Activated CD8-positive, alpha-beta memory T cell treated with anti-CD3 and anti-CD28 coated beads, Interleukin-2, amount 10 ng/mL, durations not matched to agents 7 days and 5 days (primary cell): ENCODE measurements at regions of chr1 and their contacts with region 1.

Region 1: GRCh38 chr1:181142096-181142958 is 53.8 kb downstream of the IER5 start:
- DNase-seq: peak; percentile 94
- ATAC-seq: peak; percentile 88
- H3K4me3 Mint-ChIP-seq: peak overlapping the region; percentile 35
- H3K27ac Mint-ChIP-seq: peak overlapping the region; percentile 86
- H3K4me1 Mint-ChIP-seq: peaks cover 64% of the 10 kb centered on the region
- H3K27me3 Mint-ChIP-seq: peaks cover 9% of the 10 kb centered on the region

Region 2: DNA sequence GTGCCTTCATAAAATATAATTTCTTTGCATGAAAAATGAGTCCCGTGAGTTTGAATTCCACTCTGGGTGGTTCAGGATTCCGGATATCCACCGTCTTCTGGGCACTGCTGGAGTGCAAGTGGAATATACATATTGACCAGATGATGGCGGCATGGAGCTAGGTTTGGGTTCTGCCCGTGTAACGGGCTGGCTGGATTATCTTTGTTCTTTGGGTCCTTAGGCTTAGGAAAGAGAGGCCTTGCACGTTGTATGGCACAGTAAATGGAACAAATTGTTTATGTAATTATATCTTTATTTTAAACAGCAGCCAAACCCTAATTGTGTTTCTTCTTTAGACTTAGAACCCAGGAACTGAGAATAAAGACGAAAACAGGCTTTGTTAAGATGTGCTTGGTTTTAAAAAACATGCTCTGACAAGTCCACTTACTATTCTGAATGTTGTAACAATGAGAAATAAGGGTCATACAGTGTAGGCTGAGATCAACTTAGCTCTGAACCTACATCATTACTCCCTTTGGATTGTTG is 626.4 kb before region 1 on chr1:
- CTCF ChIA-PET with region 1: interaction called, 21 read pairs
- DNase-seq: peak; percentile 68
- ATAC-seq: peak; percentile 98
- H3K4me3 Mint-ChIP-seq: no peak overlapping the region
- H3K27ac Mint-ChIP-seq: no peak overlapping the region
- H3K4me1 Mint-ChIP-seq: peaks cover 5% of the 10 kb centered on the region
- H3K27me3 Mint-ChIP-seq: peaks cover 8% of the 10 kb centered on the region

Region 3: DNA sequence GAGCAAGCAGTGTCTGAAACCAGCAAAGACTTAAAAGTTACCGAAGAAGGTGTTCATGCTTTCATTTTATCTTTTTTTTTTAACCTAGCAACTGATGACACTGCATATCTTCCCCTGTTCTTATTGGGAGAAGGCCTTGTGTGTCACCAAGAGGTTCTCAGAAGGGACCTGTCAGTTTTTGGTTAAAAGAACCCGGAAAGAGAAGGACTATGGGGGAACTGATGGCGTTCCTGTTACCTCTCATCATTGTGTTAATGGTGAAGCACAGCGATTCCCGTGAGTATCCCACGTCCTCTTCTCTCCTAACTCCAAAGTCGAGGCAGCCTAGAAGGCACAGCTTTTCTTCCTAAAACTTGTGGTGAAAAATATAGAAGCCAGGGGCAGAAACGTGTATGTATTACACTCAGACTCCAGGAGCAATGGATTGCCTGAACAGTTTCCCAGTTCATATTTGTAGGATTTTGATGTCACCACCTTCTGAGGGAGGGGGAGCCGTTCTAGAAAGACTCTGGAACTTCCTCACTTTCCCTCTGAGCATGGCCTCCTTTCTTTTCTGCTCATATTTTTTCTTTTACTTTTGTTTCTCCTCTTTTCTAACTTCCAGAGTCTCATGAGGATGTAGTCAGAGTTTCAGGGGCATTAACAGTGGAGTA is 108.4 kb before region 1 on chr1 and contains the start of gene MR1:
- CTCF ChIA-PET with region 1: interaction called, 133 read pairs
- DNase-seq: peak; percentile 60
- ATAC-seq: peak; percentile 98
- H3K4me3 Mint-ChIP-seq: peak within 1 kb of the TSS; percentile 92
- H3K27ac Mint-ChIP-seq: peak within 1 kb of the TSS; percentile 98
- H3K4me1 Mint-ChIP-seq: peaks cover 55% of the 10 kb centered on the region
- H3K27me3 Mint-ChIP-seq: no peaks in the 10 kb centered on the region
- total RNA-seq, gene MR1: 38.7 to 41.2 TPM

Region 4: GRCh38 chr1:181077576-181078242 is 64.6 kb before region 1 on chr1:
- CTCF ChIA-PET with region 1: interaction called, 83 read pairs
- DNase-seq: no peak
- ATAC-seq: no peak
- H3K4me3 Mint-ChIP-seq: no peak overlapping the region
- H3K27ac Mint-ChIP-seq: no peak overlapping the region
- H3K4me1 Mint-ChIP-seq: peaks cover 40% of the 10 kb centered on the region
- H3K27me3 Mint-ChIP-seq: peaks cover 28% of the 10 kb centered on the region

Region 5: GRCh38 chr1:181128592-181129497 is 13.5 kb before region 1 on chr1:
- CTCF ChIA-PET with region 1: interaction called, 22 read pairs
- DNase-seq: no peak
- ATAC-seq: no peak
- H3K4me3 Mint-ChIP-seq: no peak overlapping the region
- H3K27ac Mint-ChIP-seq: no peak overlapping the region
- H3K4me1 Mint-ChIP-seq: peaks cover 47% of the 10 kb centered on the region
- H3K27me3 Mint-ChIP-seq: no peaks in the 10 kb centered on the region

Region 6: GRCh38 chr1:181166377-181167196 is 24.3 kb after region 1 on chr1:
- CTCF ChIA-PET with region 1: interaction called, 70 read pairs
- DNase-seq: peak; percentile 85
- ATAC-seq: peak; percentile 100
- H3K4me3 Mint-ChIP-seq: no peak overlapping the region
- H3K27ac Mint-ChIP-seq: peak overlapping the region; percentile 35
- H3K4me1 Mint-ChIP-seq: peaks cover 5% of the 10 kb centered on the region
- H3K27me3 Mint-ChIP-seq: peaks cover 8% of the 10 kb centered on the region